Pancreas (tissue), 10 donors: ENCODE measurements at regions of chr1 and their contacts with region 1.

Region 1: GRCh38 chr1:43227143-43227764 is 42.5 kb upstream of the TMEM125 start:
- DNase-seq: peak; percentile 60 to 95 (median 82)
- ATAC-seq: peak; percentile 90 to 97 (median 93)
- H3K4me3 ChIP-seq: no peak overlapping the region
- H3K27ac ChIP-seq: no peak overlapping the region
- H3K4me1 ChIP-seq: no peaks in the 10 kb centered on the region
- H3K27me3 ChIP-seq: no peaks in the 10 kb centered on the region
- CTCF ChIP-seq: peak; percentile 92 to 95 (median 92)

Region 2: GRCh38 chr1:42904434-42904833 is 322.8 kb before region 1 on chr1:
- intact Hi-C with region 1: no loop called
- DNase-seq: no peak
- ATAC-seq: no peak
- H3K4me3 ChIP-seq: no peak overlapping the region
- H3K27ac ChIP-seq: no peak overlapping the region
- H3K4me1 ChIP-seq: no peaks in the 10 kb centered on the region
- H3K27me3 ChIP-seq: no peaks in the 10 kb centered on the region
- CTCF ChIP-seq: no peak

Region 3: DNA sequence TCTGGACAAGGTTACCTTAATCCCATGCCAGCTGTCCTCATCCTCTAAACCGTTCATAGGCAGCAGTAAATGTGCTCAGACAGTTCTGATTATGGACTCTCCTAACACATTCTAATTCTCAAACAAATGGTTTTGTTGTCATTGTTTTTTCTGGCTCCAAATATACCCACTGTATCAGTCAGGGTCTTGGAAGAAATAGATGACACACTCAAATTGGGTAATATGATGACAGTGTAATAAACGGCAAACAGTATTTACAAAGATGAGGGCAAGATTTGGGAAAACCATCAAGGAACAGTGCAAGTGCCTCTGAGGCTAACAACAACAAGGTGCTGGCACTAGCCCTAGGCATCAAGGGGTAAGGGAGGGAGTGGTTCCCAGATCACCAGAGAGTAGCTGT is 127.2 kb after region 1 on chr1:
- intact Hi-C with region 1: no loop called
- DNase-seq: no peak
- ATAC-seq: no peak
- H3K4me3 ChIP-seq: no peak overlapping the region
- H3K27ac ChIP-seq: no peak overlapping the region
- H3K4me1 ChIP-seq: peaks cover 0 to 11% (median 0%) of the 10 kb centered on the region in 3 donors
- H3K27me3 ChIP-seq: no peaks in the 10 kb centered on the region
- CTCF ChIP-seq: no peak

Region 4: DNA sequence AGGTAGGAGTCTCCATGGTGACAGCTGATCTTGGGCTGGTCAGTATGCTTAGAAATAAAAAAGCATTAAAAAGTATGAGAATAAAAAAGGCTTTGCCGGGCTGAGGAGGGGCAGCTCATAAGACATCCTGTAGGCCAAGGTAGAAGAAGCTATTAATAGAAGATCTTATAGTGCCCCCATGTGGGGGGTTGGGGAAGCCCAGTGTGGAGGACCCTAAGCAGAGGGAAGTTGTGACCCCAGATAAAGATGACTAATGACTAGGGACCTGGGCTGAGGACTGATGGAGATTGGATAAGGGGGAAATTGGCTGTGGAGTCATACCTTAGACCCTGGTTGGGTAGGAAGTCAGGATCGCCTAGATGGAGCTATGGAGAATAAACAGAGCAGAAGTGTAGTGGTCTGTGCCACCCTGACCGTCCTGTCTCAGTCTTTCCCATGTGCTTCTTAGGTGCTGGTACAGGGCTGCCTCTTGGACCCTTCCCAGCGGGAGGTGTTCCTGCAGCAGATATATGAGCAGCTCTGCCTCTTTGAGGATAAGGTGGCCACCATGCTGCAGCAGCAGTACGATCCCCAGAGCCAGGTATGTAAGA is 187.5 kb after region 1 on chr1:
- intact Hi-C with region 1: loop called in 1 of 3 experiments (anchors 5 kb)
- DNase-seq: peak in 4 of 6 donors; percentile 37 to 66 (median 54)
- ATAC-seq: peak; percentile 70 to 98 (median 88)
- H3K4me3 ChIP-seq: no peak overlapping the region
- H3K27ac ChIP-seq: no peak overlapping the region
- H3K4me1 ChIP-seq: no peaks in the 10 kb centered on the region
- H3K27me3 ChIP-seq: no peaks in the 10 kb centered on the region
- CTCF ChIP-seq: peak; percentile 33 to 57 (median 48)

Region 5: GRCh38 chr1:43423672-43424550 is 196.7 kb after region 1 on chr1:
- intact Hi-C with region 1: loop called in 2 of 3 experiments (anchors 5 kb)
- DNase-seq: peak in 1 of 6 donors; percentile 24
- ATAC-seq: no peak
- H3K4me3 ChIP-seq: no peak overlapping the region
- H3K27ac ChIP-seq: no peak overlapping the region
- H3K4me1 ChIP-seq: no peaks in the 10 kb centered on the region
- H3K27me3 ChIP-seq: no peaks in the 10 kb centered on the region
- CTCF ChIP-seq: no peak